CD14-positive monocyte (primary cell): ENCODE measurements at regions of chr3 and their contacts with region 1.

Region 1: DNA sequence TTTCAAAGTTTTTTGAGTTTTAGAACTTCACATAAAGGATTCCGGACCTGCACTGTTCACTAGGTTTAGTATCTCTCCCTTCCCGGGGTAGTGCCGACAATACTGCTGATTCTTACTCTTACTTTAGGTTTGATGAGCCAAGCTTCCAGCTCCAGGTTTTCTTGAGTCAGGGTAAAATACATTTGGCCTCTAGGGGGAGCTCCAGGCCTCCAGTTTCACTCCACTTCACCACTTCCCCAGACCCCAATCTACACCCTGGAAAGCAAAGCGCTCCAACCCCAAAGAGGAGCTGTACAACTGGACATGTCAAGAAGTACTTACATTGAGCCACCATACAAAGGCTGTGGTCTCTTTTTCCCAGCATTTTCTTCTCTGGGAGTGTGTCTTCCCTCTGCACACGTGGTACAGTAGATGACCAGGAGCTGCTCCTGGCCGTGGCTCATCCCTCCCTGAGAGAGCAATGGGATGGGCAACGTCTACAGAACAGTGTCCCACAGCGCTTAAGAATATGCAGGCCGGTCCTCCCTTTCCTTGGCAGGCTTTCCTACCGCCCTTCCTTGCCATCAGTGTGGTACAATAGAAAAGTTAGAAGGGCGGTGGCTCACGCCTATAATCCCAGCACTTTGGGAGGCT is 93.9 kb upstream of the CCDC80 start:
- DNase-seq: peak; percentile 59 to 69 (median 68)
- H3K4me3 ChIP-seq: peak overlapping the region in 1 of 3 experiments; percentile 12
- H3K4me3 Mint-ChIP-seq: no peak overlapping the region
- H3K27ac ChIP-seq: no peak overlapping the region
- H3K27ac Mint-ChIP-seq: peak overlapping the region in 1 of 7 donors; percentile 60
- H3K4me1 ChIP-seq: peaks cover 12 to 22% of the 10 kb centered on the region in 2 donors
- H3K4me1 Mint-ChIP-seq: peaks cover 19% of the 10 kb centered on the region
- H3K27me3 ChIP-seq: no peaks in the 10 kb centered on the region
- H3K27me3 Mint-ChIP-seq: no peaks in the 10 kb centered on the region
- CTCF ChIP-seq: peak; percentile 85

Region 2: DNA sequence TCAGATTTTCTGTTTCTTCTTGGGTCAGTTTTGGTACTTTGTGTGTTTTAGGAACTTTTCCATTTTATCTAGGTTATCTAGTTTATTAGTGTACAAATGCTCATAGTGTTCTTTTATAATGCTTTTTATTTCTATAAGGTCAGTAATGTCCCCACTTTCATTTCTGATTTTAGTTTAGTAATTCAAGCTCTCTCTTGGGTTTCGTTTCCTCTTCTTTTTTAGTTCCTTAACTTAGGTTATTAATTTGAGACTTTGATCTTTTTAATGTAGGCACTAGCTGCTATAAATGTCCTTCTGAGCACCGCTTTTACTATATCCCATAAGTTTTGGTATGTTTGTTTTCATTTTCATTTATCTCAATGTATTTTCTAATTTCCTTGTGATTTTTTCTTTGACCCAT is 138.8 kb after region 1 on chr3:
- intact Hi-C with region 1: loop called in 1 of 2 experiments (anchors 10 kb)
- DNase-seq: peak; percentile 27 to 76 (median 44)
- H3K4me3 ChIP-seq: peak overlapping the region in 1 of 3 experiments; percentile 25
- H3K4me3 Mint-ChIP-seq: peak overlapping the region in 1 of 2 donors; percentile 74
- H3K27ac ChIP-seq: peak overlapping the region in 1 of 2 donors; percentile 57
- H3K27ac Mint-ChIP-seq: peak overlapping the region; percentile 65 to 86 (median 76)
- H3K4me1 ChIP-seq: peaks cover 25 to 47% of the 10 kb centered on the region in 2 donors
- H3K4me1 Mint-ChIP-seq: peaks cover 39% of the 10 kb centered on the region
- H3K27me3 ChIP-seq: no peaks in the 10 kb centered on the region
- H3K27me3 Mint-ChIP-seq: peaks cover 0 to 1% (median 0%) of the 10 kb centered on the region in 3 donors
- CTCF ChIP-seq: no peak

Region 3: DNA sequence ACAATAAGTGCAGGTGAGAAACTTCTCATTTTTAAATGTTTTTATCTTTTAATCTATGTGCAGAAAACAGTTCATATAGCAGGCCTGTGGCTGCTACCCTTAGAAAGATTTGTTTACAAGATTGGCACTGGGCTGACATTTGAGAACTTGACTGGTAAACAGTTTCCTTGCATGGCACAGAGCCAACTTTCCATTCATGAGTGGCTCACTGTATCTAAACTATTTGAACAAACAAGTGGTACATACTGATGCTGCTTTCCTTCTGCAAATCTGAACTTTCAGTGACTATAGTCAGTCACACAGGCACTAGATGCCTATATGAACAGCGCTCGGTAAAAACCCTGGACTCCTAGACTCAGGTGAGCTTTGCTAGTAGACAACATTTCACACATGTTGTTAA is 249.7 kb after region 1 on chr3:
- intact Hi-C with region 1: loop called (anchors 5 kb)
- DNase-seq: no peak
- H3K4me3 ChIP-seq: no peak overlapping the region
- H3K4me3 Mint-ChIP-seq: no peak overlapping the region
- H3K27ac ChIP-seq: no peak overlapping the region
- H3K27ac Mint-ChIP-seq: no peak overlapping the region
- H3K4me1 ChIP-seq: peaks cover 4 to 9% of the 10 kb centered on the region in 2 donors
- H3K4me1 Mint-ChIP-seq: peaks cover 9% of the 10 kb centered on the region
- H3K27me3 ChIP-seq: no peaks in the 10 kb centered on the region
- H3K27me3 Mint-ChIP-seq: no peaks in the 10 kb centered on the region
- CTCF ChIP-seq: no peak